MCF 10A (cell line): ENCODE measurements at regions of chr7 and their contacts with region 1.

Region 1: DNA sequence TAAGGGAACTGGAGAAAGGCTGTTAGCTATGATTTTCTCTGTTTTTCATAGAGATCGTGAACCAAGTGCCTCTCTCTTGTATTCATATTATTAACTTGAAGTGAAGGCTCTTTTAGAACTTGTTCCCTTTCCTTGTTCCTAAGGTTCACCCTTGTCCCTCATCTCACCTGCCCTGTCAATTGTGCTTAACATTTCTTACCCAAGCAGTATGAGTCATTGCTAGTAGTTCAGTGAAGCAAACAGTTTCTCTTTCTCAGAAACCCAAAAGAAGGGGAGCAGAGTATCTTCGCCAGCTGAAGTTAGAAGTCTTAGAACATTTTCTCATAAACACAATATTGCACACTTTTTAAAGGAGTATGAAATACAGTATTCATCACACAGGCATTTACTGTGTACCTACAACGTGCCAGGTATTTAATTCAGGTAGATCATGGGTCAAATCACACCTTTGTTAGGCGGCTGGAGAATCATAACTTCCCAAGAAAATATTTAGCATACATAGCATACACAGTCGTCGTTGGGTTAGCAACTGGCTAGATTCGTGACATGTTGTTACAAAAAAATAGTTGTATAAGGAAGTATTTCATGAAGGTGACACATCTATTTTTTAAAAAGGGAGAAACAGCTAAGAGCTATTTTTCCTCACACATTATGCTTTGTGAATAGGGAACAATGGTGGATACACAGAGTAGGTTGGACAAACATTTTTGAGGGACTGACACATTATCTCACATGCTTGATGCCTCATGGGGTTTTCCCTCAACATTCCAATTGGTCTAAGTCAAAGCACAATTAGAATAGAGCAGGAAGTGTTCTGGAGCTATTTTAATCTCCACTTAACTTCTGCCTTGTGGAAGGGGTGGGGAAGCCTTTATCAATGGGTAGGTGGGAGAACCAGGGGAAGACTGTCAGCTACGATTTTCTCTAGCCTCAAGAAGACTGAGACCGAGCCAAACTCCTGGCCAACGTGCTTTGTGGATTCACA is 13.2 kb downstream of the HDAC9 start:
- DNase-seq: peak; percentile 87
- H3K4me3 Mint-ChIP-seq: peak overlapping the region; percentile 71
- H3K27ac Mint-ChIP-seq: peak overlapping the region; percentile 100
- H3K4me1 Mint-ChIP-seq: peaks cover 28% of the 10 kb centered on the region
- H3K27me3 Mint-ChIP-seq: no peaks in the 10 kb centered on the region
- CTCF ChIP-seq: no peak

Region 2: GRCh38 chr7:18421297-18422002 is 87.3 kb before region 1 on chr7:
- CTCF ChIA-PET with region 1: no interaction called
- POLR2A ChIA-PET with region 1: interaction called, 16 read pairs
- intact Hi-C with region 1: no loop called
- DNase-seq: no peak
- H3K4me3 Mint-ChIP-seq: no peak overlapping the region
- H3K27ac Mint-ChIP-seq: peak overlapping the region; percentile 87
- H3K4me1 Mint-ChIP-seq: peaks cover 15% of the 10 kb centered on the region
- H3K27me3 Mint-ChIP-seq: no peaks in the 10 kb centered on the region
- CTCF ChIP-seq: no peak

Region 3: DNA sequence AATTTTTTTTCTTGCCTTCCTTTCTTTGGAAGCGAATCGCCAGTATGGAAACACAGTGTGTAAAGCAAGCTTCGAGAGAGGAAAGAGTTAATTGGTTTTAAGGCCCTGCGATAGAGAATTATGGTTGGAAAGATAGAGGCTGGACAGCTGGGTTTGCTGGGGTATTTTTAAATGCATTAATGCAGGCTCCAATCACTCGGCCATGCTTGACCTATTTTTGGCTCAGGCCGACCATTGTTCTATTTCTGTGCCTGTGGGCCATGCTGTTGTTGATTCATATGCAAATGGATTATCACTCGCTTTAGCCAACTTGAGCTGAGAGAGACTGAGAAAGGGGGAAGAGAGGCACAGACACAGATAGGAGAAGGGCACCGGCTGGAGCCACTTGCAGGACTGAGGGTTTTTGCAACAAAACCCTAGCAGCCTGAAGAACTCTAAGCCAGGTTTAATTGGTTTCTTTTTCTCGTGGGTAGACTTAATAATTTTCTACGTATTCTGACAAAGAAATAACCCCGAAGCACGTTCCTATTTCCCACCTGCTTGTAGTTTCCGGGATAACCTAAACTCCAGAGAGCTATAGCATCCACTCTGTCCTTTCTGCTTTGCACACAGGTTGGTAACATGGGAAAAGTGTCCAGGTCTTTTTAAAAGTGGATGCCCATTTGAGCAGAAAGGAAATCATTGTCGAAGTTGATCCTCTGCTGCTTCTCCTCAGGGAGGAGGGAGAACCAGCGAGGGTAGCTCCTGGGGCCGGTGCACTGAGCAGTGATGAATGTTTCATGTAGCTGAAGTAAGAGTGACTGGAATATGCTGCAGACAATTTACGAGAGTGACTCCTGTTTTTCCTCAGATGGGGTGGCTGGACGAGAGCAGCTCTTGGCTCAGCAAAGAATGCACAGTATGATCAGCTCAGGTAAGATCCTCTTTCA is 13.1 kb before region 1 on chr7 and contains the start of gene HDAC9:
- CTCF ChIA-PET with region 1: interaction called, 3 read pairs
- POLR2A ChIA-PET with region 1: interaction called, 23 read pairs
- intact Hi-C with region 1: no loop called
- DNase-seq: peak; percentile 46
- H3K4me3 Mint-ChIP-seq: no peak within 1 kb of the TSS
- H3K27ac Mint-ChIP-seq: no peak within 1 kb of the TSS
- H3K4me1 Mint-ChIP-seq: peaks cover 6% of the 10 kb centered on the region
- H3K27me3 Mint-ChIP-seq: no peaks in the 10 kb centered on the region
- CTCF ChIP-seq: no peak
- total RNA-seq, gene HDAC9: 11.3 and 26.0 TPM in 2 replicates

Region 4: DNA sequence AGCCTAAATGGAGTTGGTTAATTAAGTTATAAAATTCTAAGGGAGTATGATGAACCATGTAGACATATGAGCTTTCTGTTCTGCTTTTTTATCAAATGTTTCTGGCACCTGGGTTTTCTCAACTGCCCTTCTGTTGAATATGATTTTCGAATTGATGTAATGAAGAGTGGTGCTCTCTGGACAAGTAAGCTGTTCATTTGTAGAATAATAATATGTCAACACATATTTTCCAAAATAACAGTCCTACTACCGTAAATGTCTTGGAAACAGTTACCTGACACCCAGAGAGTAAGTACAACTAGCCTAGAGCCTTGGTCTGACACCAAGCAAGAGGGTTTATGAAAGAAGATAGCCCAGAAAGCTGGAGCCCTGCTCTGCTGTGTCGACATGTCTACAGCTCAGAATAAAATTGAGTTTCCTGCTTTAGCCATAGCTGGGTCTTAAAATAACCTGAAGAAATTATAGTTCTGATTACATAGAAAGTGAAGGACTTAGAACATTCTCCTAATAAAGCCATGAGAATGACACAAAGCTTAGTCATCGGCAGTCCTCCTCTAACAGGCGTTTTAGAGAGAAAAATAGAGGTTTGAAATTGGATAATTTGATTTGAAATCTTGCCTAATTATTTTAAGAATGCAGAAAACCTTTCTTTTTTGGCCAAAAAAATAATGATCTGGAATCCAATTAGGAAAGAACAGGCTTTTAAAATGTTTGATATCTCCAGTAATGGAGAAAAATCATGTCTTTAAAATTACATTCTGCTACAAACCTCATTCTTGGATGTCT is 11.9 kb after region 1 on chr7:
- CTCF ChIA-PET with region 1: interaction called, 7 read pairs
- POLR2A ChIA-PET with region 1: interaction called, 36 read pairs
- intact Hi-C with region 1: no loop called
- DNase-seq: peak; percentile 38
- H3K4me3 Mint-ChIP-seq: no peak overlapping the region
- H3K27ac Mint-ChIP-seq: peak overlapping the region; percentile 27
- H3K4me1 Mint-ChIP-seq: peaks cover 9% of the 10 kb centered on the region
- H3K27me3 Mint-ChIP-seq: no peaks in the 10 kb centered on the region
- CTCF ChIP-seq: no peak

Region 5: DNA sequence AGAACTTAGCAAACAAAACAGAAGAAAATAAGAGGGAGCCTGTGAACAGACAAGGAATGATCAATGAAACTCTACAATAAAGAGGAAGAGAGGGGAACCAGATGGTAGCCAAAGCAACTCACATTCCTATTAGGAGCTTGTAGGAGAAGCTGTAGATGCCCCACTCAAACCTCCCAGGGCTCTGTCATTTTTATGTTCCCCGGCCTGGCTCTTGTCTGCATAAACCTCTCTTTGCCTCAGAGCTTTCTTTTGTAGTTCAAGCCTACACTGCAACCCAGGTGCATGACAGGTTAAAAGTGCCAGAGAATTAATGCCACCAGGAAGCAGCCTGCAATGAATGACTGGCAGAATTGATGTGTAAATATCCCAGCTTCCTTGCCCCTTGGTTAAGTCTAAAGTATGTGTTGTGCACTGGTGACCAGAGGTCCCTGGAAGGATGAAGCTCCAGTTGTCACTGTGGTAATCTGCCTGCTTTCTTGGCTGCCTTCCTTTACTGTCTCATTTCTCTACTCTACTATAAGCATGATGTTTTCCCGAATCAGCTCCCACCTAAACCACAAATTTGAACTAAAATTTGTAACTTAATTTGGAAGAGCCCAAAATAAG is 27.2 kb after region 1 on chr7:
- CTCF ChIA-PET with region 1: no interaction called
- POLR2A ChIA-PET with region 1: interaction called, 12 read pairs
- intact Hi-C with region 1: no loop called
- DNase-seq: no peak
- H3K4me3 Mint-ChIP-seq: no peak overlapping the region
- H3K27ac Mint-ChIP-seq: no peak overlapping the region
- H3K4me1 Mint-ChIP-seq: no peaks in the 10 kb centered on the region
- H3K27me3 Mint-ChIP-seq: no peaks in the 10 kb centered on the region
- CTCF ChIP-seq: no peak

Region 6: GRCh38 chr7:18570890-18571478 is 62.2 kb after region 1 on chr7:
- CTCF ChIA-PET with region 1: interaction called, 4 read pairs
- POLR2A ChIA-PET with region 1: interaction called, 11 read pairs
- intact Hi-C with region 1: loop called (anchors 5 kb)
- DNase-seq: peak; percentile 63
- H3K4me3 Mint-ChIP-seq: no peak overlapping the region
- H3K27ac Mint-ChIP-seq: no peak overlapping the region
- H3K4me1 Mint-ChIP-seq: no peaks in the 10 kb centered on the region
- H3K27me3 Mint-ChIP-seq: no peaks in the 10 kb centered on the region
- CTCF ChIP-seq: peak; percentile 56